ENCODE measurements at regions of chr20 and their contacts with region 1.

Region 1: DNA sequence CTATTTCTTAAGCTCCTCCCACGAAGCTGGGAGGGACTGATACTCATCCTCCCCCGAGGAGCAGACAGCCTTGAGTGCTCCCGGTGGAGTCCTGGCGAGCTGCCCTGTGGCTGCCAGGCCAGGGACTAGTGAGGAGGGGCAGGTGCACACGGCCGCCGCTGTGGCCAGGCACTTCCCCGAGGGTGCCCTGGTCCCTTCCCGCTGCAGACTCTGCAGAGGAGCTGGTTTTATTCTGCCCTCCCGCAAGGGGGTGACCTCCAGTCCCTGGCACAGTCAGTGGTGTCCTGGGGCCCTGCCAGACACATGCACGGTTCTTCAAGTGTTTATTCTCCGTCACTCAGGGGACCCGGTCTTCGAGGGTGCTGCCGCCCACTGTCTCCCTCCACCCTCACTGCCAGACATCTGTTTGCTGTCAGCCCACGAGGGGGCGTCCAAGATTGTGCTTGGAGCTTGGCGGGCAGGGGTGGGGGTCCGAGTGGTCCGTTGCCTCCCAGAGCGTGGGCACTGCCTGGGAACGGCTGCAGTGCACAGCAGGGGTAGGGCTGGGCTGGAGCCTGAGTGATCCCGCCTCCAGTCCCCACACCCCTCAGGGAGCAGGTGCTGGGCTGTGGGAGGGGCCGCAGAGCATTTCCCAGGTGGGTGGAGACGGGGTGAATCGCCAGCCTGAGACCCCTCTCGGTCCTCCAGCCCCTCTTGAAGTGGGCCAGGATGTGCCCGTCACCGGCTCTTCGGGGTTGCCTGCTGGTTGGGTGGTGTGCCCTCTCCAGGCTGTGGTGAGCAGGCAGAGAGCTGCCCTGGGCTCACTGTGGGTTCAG is 3.1 kb upstream of the CABLES2 start:
- DNase-seq: peak; percentile 68
- H3K4me3 Mint-ChIP-seq: no peak overlapping the region
- H3K27ac Mint-ChIP-seq: peak overlapping the region; percentile 4
- H3K4me1 Mint-ChIP-seq: peaks cover 27% of the 10 kb centered on the region
- H3K27me3 Mint-ChIP-seq: no peaks in the 10 kb centered on the region
- CTCF ChIP-seq: peak; percentile 94

Region 2: GRCh38 chr20:62473717-62474603 is 63.8 kb after region 1 on chr20:
- CTCF ChIA-PET with region 1: no interaction called
- intact Hi-C with region 1: no loop called
- DNase-seq: no peak
- H3K4me3 Mint-ChIP-seq: no peak overlapping the region
- H3K27ac Mint-ChIP-seq: no peak overlapping the region
- H3K4me1 Mint-ChIP-seq: peaks cover 12% of the 10 kb centered on the region
- H3K27me3 Mint-ChIP-seq: peaks cover 69% of the 10 kb centered on the region
- CTCF ChIP-seq: no peak

Region 3: DNA sequence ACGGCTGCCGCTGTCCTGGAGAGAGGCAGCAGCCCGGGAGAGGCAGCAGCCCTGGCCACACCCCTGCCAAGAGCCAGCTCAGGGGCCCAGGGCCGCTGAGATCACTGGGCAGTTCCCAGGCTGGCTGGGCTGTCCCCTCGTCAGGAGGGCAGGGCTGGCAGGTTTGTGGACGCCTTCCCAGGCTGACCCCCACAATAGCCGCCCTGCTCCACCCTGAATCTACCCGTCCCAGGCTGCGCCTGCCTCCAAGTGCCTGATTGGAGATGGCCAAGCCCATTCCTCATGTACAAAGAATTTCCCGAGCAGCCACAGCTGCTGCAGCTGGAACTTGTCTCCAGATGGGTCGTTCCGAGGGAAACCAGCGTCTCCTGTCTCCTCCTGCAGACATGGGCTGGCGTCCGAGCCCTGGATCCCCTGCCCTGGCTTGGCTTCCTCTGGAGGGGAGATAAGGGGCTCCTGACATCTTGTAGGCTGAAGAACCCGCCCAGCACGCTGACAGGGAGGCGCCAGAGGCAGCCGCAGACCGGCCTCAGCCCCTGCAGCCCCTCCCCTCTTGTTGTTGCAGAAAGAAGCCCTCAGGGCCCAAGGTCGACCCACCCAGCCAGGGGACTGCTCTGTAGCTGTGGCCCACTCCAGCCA is 75.0 kb after region 1 on chr20:
- CTCF ChIA-PET with region 1: interaction called, 4 read pairs
- intact Hi-C with region 1: loop called (anchors 5 kb)
- DNase-seq: peak; percentile 41
- H3K4me3 Mint-ChIP-seq: no peak overlapping the region
- H3K27ac Mint-ChIP-seq: no peak overlapping the region
- H3K4me1 Mint-ChIP-seq: peaks cover 7% of the 10 kb centered on the region
- H3K27me3 Mint-ChIP-seq: peaks cover 86% of the 10 kb centered on the region
- CTCF ChIP-seq: no peak

Region 4: GRCh38 chr20:62723351-62723750 is 313.2 kb after region 1 on chr20:
- CTCF ChIA-PET with region 1: no interaction called
- intact Hi-C with region 1: no loop called
- DNase-seq: no peak
- H3K4me3 Mint-ChIP-seq: no peak overlapping the region
- H3K27ac Mint-ChIP-seq: no peak overlapping the region
- H3K4me1 Mint-ChIP-seq: peaks cover 7% of the 10 kb centered on the region
- H3K27me3 Mint-ChIP-seq: peaks cover 99% of the 10 kb centered on the region
- CTCF ChIP-seq: no peak

Measured in Calu3 (cell line).